ENCODE measurements at regions of chr11 and their contacts with region 1.

Region 1: GRCh38 chr11:87352759-87353707 is 315.3 kb downstream of the TMEM135 start:
- DNase-seq: peak; percentile 64
- ATAC-seq: peak; percentile 99
- H3K4me3 ChIP-seq: no peak overlapping the region
- H3K27ac ChIP-seq: no peak overlapping the region
- H3K4me1 ChIP-seq: 0 out of 2 replicates have a peak, but pooled peaks cover 2% of the 10 kb centered on the region
- H3K27me3 ChIP-seq: no peaks in the 10 kb centered on the region; the same call in 1 of the 2 replicates
- CTCF ChIP-seq: peak; percentile 97
- POLR2A ChIP-seq: no peak
- RAD21 ChIP-seq: peak; percentile 98

Region 2: GRCh38 chr11:86938900-86939880 is 413.8 kb before region 1 on chr11:
- CTCF ChIA-PET with region 1: no interaction called
- POLR2A ChIA-PET with region 1: interaction called, 3 read pairs
- dilution Hi-C with region 1: no loop called
- in situ Hi-C with region 1: no loop called
- intact Hi-C with region 1: loop called (anchors 5 kb)
- DNase-seq: peak; percentile 68
- ATAC-seq: peak; percentile 43
- H3K4me3 ChIP-seq: no peak overlapping the region
- H3K27ac ChIP-seq: no peak overlapping the region
- H3K4me1 ChIP-seq: peaks cover 23% of the 10 kb centered on the region
- H3K27me3 ChIP-seq: no peaks in the 10 kb centered on the region
- CTCF ChIP-seq: peak; percentile 74
- POLR2A ChIP-seq: no peak
- RAD21 ChIP-seq: peak; percentile 73

Region 3: DNA sequence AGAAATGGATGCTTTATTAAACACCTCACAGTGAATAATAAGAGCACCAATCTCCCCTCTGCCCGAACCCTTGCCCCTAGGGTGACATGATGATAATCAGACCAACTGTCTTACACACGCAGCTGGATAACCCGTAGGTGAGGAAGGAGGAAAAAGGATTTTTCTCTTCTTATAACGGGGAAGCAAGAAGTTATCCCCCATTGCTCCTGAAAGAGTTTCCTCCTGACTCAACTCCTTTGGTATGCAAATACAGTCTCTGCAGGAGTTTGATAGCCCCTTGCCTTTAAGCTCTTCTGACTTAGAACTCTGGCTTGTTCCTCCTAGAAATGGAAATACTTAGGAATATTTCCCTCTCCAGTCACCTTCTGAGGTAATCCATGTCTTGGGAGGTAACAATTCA is 140.5 kb after region 1 on chr11:
- CTCF ChIA-PET with region 1: no interaction called
- POLR2A ChIA-PET with region 1: no interaction called
- dilution Hi-C with region 1: no loop called
- in situ Hi-C with region 1: no loop called
- intact Hi-C with region 1: no loop called
- DNase-seq: peak; percentile 55
- ATAC-seq: peak; percentile 93
- H3K4me3 ChIP-seq: no peak overlapping the region
- H3K27ac ChIP-seq: no peak overlapping the region
- H3K4me1 ChIP-seq: peaks cover 1% of the 10 kb centered on the region; the same call in 1 of the 2 replicates
- H3K27me3 ChIP-seq: no peaks in the 10 kb centered on the region
- CTCF ChIP-seq: no peak
- POLR2A ChIP-seq: no peak
- RAD21 ChIP-seq: no peak

Region 4: GRCh38 chr11:87722756-87723565 is 369.9 kb after region 1 on chr11:
- CTCF ChIA-PET with region 1: no interaction called
- POLR2A ChIA-PET with region 1: no interaction called
- dilution Hi-C with region 1: no loop called
- in situ Hi-C with region 1: loop called (anchors 25 kb)
- intact Hi-C with region 1: loop called (anchors 2 kb)
- DNase-seq: peak; percentile 2
- ATAC-seq: 0 out of 2 replicates have a peak, but pooled peaks have one; percentile 49
- H3K4me3 ChIP-seq: no peak overlapping the region
- H3K27ac ChIP-seq: no peak overlapping the region
- H3K4me1 ChIP-seq: no peaks in the 10 kb centered on the region
- H3K27me3 ChIP-seq: no peaks in the 10 kb centered on the region
- CTCF ChIP-seq: peak; percentile 51
- POLR2A ChIP-seq: no peak
- RAD21 ChIP-seq: peak; percentile 42

Region 5: GRCh38 chr11:87972133-87972532 is 619.1 kb after region 1 on chr11:
- CTCF ChIA-PET with region 1: no interaction called
- POLR2A ChIA-PET with region 1: no interaction called
- dilution Hi-C with region 1: no loop called
- in situ Hi-C with region 1: loop called (anchors 25 kb)
- intact Hi-C with region 1: no loop called
- DNase-seq: no peak
- ATAC-seq: no peak
- H3K4me3 ChIP-seq: no peak overlapping the region
- H3K27ac ChIP-seq: no peak overlapping the region
- H3K4me1 ChIP-seq: no peaks in the 10 kb centered on the region
- H3K27me3 ChIP-seq: no peaks in the 10 kb centered on the region
- CTCF ChIP-seq: no peak
- POLR2A ChIP-seq: no peak
- RAD21 ChIP-seq: no peak

Region 6: DNA sequence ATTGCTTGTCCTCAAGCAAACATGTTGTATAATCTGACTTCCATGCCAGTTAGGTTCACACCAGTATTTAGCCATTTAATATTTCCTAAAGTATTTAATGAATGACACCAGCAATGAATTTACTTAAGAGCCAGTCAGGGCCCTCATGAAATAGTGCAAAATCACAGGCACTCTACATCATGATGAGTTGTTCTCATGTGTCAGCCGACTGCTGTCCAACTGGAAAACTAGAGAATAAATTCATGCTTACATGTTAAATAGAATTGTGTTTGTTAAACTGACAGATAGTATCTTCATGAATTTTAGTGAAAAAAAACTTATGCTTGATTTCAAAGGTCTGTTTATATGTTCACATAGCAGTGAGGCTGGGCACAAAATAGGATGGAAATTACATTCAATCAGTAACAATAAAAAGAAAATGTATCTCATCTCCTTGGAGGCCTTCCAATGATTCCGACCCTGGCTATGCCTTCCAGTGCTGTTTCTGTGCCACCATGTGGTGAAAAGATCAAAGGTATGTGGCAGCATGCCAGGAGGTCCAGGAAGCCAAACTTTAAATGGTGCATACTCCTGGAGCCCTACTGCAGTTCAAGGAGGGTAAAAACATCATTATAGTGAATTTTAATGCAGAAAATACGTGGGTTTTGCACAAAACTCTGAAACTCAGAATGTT is 939.3 kb after region 1 on chr11:
- CTCF ChIA-PET with region 1: no interaction called
- POLR2A ChIA-PET with region 1: no interaction called
- dilution Hi-C with region 1: no loop called
- in situ Hi-C with region 1: no loop called
- intact Hi-C with region 1: loop called (anchors 10 kb)
- DNase-seq: peak; percentile 22
- ATAC-seq: peak; percentile 21; the same call in 1 of the 2 replicates
- H3K4me3 ChIP-seq: no peak overlapping the region
- H3K27ac ChIP-seq: no peak overlapping the region
- H3K4me1 ChIP-seq: peaks cover 2% of the 10 kb centered on the region; the same call in 1 of the 2 replicates
- H3K27me3 ChIP-seq: no peaks in the 10 kb centered on the region
- CTCF ChIP-seq: no peak
- POLR2A ChIP-seq: no peak
- RAD21 ChIP-seq: no peak

Measured in IMR-90 (cell line).